ENCODE measurements at regions of chr19 and their contacts with region 1.

Region 1: DNA sequence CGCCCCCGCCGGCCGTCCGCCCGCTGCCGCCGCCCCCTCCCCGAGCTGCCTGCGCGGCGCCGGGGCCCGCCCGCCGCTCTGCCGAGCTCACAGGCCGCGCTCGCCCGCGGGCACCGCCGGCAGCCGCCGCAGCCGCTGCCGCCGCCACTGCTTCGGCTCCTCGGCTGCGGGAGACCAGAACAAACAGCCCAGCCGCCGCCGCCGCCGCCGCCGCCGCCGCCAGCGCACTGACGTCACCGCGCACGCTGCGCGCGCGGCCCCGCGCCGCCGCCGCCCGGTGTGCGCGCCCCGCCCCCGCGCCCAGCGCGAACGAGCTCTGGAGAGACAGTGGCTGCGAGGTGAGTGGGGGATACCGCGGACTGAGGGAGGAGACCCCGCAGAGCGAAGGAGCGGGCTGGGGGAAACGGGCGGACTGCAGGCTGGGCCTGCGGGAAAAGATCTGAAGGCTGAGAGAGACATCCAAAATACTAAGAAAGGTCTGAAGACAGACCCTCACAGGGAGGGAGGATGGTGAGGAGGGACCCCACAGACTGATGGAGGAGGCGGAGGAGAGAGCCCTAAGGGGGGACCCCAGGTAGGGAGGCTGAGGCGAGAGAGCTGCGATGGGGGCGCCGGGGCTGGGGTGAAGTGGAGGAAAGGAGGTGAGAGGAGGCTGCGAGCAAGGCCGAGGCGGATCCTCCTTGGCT is at the start of gene BRD4:
- DNase-seq: peak; percentile 85
- H3K4me3 ChIP-seq: peak within 1 kb of the TSS; percentile 86 to 94 (median 88)
- H3K27ac ChIP-seq: peak within 1 kb of the TSS; percentile 91 to 97 (median 96)
- H3K4me1 ChIP-seq: peaks cover 0 to 47% (median 44%) of the 10 kb centered on the region in 4 donors
- H3K27me3 ChIP-seq: no peaks in the 10 kb centered on the region
- CTCF ChIP-seq: no peak
- EP300 ChIP-seq: no peak
- POLR2A ChIP-seq: no peak
- total RNA-seq, gene BRD4: 15.0 to 43.8 (median 21.4) TPM

Region 2: GRCh38 chr19:15297416-15298224 is 34.8 kb before region 1 on chr19:
- intact Hi-C with region 1: loop called (anchors 5 kb)
- DNase-seq: no peak
- H3K4me3 ChIP-seq: peak overlapping the region in 2 of 4 donors; percentile 1 to 13
- H3K27ac ChIP-seq: peak overlapping the region; percentile 62 to 84 (median 74)
- H3K4me1 ChIP-seq: peaks cover 0 to 99% (median 98%) of the 10 kb centered on the region in 4 donors
- H3K27me3 ChIP-seq: no peaks in the 10 kb centered on the region
- CTCF ChIP-seq: no peak
- EP300 ChIP-seq: peak in 1 of 4 donors; percentile 39
- POLR2A ChIP-seq: no peak

Region 3: GRCh38 chr19:15404097-15404779 is 71.8 kb after region 1 on chr19:
- intact Hi-C with region 1: no loop called
- DNase-seq: peak; percentile 84
- H3K4me3 ChIP-seq: peak overlapping the region in 3 of 4 donors; percentile 8 to 31 (median 20)
- H3K27ac ChIP-seq: peak overlapping the region; percentile 64 to 92 (median 87)
- H3K4me1 ChIP-seq: peaks cover 0 to 86% (median 82%) of the 10 kb centered on the region in 4 donors
- H3K27me3 ChIP-seq: no peaks in the 10 kb centered on the region
- CTCF ChIP-seq: no peak
- EP300 ChIP-seq: peak in 1 of 4 donors; percentile 22
- POLR2A ChIP-seq: no peak

Region 4: GRCh38 chr19:15418588-15419412 is 86.3 kb after region 1 on chr19 and contains the start of gene AKAP8L:
- intact Hi-C with region 1: loop called (anchors 5 kb)
- DNase-seq: peak; percentile 100
- H3K4me3 ChIP-seq: peak within 1 kb of the TSS; percentile 73 to 81 (median 78)
- H3K27ac ChIP-seq: peak within 1 kb of the TSS; percentile 85 to 94 (median 90)
- H3K4me1 ChIP-seq: peaks cover 0 to 48% (median 42%) of the 10 kb centered on the region in 4 donors
- H3K27me3 ChIP-seq: no peaks in the 10 kb centered on the region
- CTCF ChIP-seq: peak; percentile 43 to 50 (median 46)
- EP300 ChIP-seq: no peak
- POLR2A ChIP-seq: peak; percentile 94 to 95
- total RNA-seq, gene AKAP8L: 90.5 to 145 (median 101) TPM